MCF 10A (cell line): ENCODE measurements at regions of chr1 and their contacts with region 1.

Region 1: GRCh38 chr1:109532365-109533136 is 7.1 kb upstream of the GPR61 start:
- DNase-seq: peak; percentile 78
- H3K4me3 Mint-ChIP-seq: no peak overlapping the region
- H3K27ac Mint-ChIP-seq: no peak overlapping the region
- H3K4me1 Mint-ChIP-seq: no peaks in the 10 kb centered on the region
- H3K27me3 Mint-ChIP-seq: no peaks in the 10 kb centered on the region
- CTCF ChIP-seq: peak; percentile 81

Region 2: DNA sequence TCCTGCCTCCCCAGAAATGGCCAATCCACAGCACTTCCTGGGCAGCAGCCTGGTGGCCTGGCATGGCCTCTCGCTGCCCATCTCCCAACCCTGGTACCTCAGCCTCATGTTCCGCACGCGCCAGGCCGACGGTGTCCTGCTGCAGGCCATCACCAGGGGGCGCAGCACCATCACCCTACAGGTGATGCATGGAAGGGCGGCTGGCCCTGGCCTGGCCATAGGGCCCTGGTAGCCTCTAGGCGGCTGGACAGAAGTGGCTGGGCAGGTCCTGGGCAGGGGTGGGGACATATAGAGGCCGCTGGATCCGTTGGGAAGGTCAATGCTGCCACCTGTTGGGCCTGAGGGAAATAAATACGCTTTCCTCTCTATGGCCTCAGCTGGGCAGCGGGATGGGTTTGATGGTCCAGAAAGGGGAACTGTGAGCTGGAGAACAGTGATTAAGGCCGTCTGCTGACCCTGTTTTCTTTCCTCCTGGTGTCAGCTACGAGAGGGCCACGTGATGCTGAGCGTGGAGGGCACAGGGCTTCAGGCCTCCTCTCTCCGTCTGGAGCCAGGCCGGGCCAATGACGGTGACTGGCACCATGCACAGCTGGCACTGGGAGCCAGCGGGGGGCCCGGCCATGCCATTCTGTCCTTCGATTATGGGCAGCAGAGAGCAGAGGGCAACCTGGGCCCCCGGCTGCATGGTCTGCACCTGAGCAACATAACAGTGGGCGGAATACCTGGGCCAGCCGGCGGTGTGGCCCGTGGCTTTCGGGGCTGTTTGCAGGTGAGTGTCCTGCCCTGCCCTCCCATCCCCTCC is 268.8 kb before region 1 on chr1:
- CTCF ChIA-PET with region 1: interaction called, 4 read pairs
- POLR2A ChIA-PET with region 1: no interaction called
- intact Hi-C with region 1: loop called (anchors 1 kb)
- DNase-seq: peak; percentile 94
- H3K4me3 Mint-ChIP-seq: peak overlapping the region; percentile 47
- H3K27ac Mint-ChIP-seq: no peak overlapping the region
- H3K4me1 Mint-ChIP-seq: peaks cover 24% of the 10 kb centered on the region
- H3K27me3 Mint-ChIP-seq: no peaks in the 10 kb centered on the region
- CTCF ChIP-seq: peak; percentile 99

Region 3: DNA sequence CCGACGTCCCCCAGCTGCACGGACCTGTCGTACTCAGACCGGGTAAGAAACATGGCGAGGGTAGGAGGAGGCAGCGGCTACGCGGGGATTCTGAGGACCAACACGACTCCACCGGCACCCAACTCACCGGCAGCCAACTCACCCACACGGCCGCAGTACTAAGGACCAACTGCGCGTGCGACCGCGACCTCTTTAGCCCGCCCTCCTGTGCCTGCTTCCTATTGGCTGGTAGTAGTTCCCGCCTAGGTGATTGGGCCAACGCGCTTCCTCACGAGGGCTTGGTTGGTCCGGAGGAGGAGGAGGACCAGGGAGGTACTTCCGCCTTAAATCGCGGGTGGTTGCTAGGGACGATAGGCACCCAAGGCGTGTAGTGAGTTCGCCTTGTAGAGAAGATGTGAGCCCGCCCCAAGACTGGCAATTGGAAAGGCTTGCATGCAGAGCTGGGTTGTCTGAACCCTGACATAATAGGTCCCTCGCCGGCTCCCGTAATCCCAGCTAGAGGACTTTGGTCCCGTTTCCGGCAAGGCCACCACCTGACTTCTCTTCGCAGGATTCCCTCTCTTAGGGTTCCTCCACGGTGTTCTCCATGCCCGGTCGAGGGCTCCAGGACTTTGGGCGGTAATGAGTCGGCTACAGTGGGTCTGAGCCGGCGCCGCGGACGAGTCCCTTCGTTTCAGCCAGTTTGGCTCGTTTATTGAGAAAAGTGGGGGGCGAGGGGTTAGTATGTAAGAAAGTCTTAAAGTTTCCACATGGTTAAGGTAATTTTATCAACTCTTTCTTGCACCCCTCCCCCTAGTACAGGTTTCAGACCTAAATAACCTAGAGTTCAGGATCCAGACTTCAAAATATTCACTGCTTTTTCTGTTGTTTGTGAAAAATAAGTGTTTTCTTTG is 106.0 kb before region 1 on chr1 and contains the start of gene PSMA5:
- CTCF ChIA-PET with region 1: interaction called, 30 read pairs
- POLR2A ChIA-PET with region 1: interaction called, 16 read pairs
- intact Hi-C with region 1: loop called (anchors 1 kb)
- DNase-seq: peak; percentile 100
- H3K4me3 Mint-ChIP-seq: peak within 1 kb of the TSS; percentile 95
- H3K27ac Mint-ChIP-seq: peak within 1 kb of the TSS; percentile 90
- H3K4me1 Mint-ChIP-seq: peaks cover 24% of the 10 kb centered on the region
- H3K27me3 Mint-ChIP-seq: no peaks in the 10 kb centered on the region
- CTCF ChIP-seq: no peak
- total RNA-seq, gene PSMA5: 109 and 113 TPM in 2 replicates

Region 4: DNA sequence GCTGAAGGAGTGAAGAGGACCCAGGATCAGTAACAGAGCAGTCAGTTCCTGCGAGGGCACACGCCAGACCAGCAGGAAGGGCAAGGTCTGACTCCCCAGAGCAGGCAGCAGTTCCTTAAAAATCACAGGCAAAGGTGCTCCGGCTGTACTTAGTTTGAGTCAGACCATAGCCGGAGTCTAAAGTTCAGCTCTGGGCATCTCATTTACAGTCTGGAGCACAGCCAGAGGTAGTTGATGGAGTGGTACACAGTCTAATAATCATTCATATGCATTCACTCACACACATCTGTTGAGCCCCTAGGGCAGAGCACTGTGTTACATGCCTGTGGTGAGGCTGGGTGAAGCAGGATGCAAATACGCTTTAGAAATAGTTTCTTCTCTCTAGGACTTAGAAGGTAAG is 15.7 kb before region 1 on chr1:
- CTCF ChIA-PET with region 1: interaction called, 1,071 read pairs
- POLR2A ChIA-PET with region 1: no interaction called
- intact Hi-C with region 1: no loop called
- DNase-seq: no peak
- H3K4me3 Mint-ChIP-seq: no peak overlapping the region
- H3K27ac Mint-ChIP-seq: no peak overlapping the region
- H3K4me1 Mint-ChIP-seq: no peaks in the 10 kb centered on the region
- H3K27me3 Mint-ChIP-seq: peaks cover 11% of the 10 kb centered on the region
- CTCF ChIP-seq: no peak

Region 5: DNA sequence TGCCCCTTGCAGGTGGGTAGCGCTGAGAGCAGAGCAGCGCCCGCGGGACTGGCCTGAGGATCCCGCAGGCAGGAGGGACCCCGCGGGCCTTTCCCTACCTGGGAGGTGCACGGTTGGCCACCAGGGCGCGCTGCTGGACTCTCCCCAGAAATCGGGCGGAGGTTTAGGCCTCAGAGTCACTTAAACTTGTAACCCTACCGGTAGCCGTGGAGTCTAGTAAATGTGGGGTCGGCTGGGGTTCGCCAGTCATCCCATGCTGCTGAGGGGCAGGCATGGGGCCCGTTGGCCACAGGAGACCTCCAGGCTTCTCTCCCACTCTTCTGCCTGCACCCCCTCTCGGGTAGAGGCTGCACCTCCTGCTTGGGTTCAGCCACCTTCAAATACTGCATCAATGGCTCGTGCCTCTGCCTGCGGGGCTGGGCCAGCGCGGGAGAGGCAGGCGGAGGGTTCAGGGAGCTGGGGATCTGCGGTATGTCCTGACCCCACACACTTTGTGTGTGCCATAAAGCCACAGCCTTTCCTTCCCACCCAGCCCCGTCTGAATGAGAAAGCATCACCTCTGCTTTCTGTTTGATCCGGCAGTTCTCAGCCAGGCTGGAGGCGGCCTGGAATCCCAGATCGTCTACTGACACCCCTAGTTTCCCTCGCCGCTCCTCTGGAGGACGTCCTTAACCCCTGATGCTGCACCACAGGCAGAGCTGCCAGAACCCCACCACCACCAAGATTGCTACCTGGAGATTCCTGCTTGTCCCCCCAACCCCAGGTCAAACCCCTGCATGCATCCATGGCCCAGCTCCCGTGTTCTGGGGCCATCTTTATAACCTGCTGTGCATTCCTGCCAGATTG is 111.1 kb after region 1 on chr1:
- CTCF ChIA-PET with region 1: interaction called, 16 read pairs
- POLR2A ChIA-PET with region 1: no interaction called
- intact Hi-C with region 1: no loop called
- DNase-seq: peak; percentile 80
- H3K4me3 Mint-ChIP-seq: no peak overlapping the region
- H3K27ac Mint-ChIP-seq: no peak overlapping the region
- H3K4me1 Mint-ChIP-seq: no peaks in the 10 kb centered on the region
- H3K27me3 Mint-ChIP-seq: no peaks in the 10 kb centered on the region
- CTCF ChIP-seq: peak; percentile 85